ENCODE measurements at regions of chr16 and their contacts with region 1.

Region 1: GRCh38 chr16:578870-579405 is 9.2 kb downstream of the PIGQ start:
- DNase-seq: peak; percentile 88
- ATAC-seq: peak; percentile 73
- H3K4me3 Mint-ChIP-seq: no peak overlapping the region
- H3K27ac Mint-ChIP-seq: no peak overlapping the region
- H3K4me1 Mint-ChIP-seq: peaks cover 4% of the 10 kb centered on the region
- H3K27me3 Mint-ChIP-seq: no peaks in the 10 kb centered on the region
- CTCF ChIP-seq: peak; percentile 73

Region 2: GRCh38 chr16:502179-502943 is 76.6 kb before region 1 on chr16:
- CTCF ChIA-PET with region 1: no interaction called
- POLR2A ChIA-PET with region 1: no interaction called
- DNase-seq: no peak
- ATAC-seq: no peak
- H3K4me3 Mint-ChIP-seq: no peak overlapping the region
- H3K27ac Mint-ChIP-seq: peak overlapping the region; percentile 69
- H3K4me1 Mint-ChIP-seq: peaks cover 3% of the 10 kb centered on the region; the same call in 1 of the 2 replicates
- H3K27me3 Mint-ChIP-seq: no peaks in the 10 kb centered on the region
- CTCF ChIP-seq: no peak

Region 3: DNA sequence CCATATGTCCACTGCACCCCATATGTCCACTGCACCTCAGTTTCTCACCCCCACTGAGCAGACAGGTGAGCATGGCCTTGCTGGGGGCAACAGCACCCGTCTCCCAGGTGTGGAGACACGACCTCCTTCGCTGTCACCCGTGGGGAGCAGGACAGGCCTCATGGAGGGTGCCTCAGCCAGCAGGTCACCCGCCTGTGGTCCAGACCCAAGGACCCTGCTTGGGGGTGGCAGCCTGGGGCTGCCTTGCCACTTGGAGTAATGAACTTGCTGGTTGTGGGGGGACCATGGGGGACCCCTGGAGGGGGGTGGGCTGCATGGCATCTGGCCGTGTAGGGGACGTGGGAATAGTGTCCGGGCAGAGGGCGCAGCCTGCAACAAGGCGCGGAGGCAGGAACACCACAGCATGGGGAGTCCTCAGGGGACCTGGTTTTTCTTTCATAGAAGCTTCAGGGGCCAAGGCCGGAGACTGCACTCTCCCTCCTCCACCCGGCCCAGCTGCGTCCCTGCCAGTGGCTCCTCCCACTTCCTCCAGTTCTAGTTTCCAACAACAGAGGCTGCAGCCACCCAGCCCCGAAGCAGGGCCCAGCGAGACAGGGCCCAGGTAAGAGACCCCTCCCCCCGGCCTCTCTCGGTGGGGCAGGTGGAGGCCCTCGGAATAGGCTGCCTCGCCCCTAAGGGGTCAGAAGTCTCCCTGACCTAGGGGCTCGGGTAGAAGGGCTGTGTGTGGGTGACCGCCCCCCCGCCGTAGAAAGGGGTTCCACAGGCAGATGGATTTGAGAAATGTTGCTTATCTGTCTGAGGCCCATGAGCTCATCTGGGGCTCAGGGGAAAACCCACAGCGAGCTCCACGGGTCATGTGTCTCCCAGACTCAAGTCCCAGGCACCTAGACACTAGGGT is 12.2 kb before region 1 on chr16 and contains the start of gene NHLRC4:
- CTCF ChIA-PET with region 1: interaction called, 18 read pairs
- POLR2A ChIA-PET with region 1: no interaction called
- DNase-seq: peak; percentile 76
- ATAC-seq: peak; percentile 64
- H3K4me3 Mint-ChIP-seq: peak within 1 kb of the TSS; percentile 10; the same call in 1 of the 2 replicates
- H3K27ac Mint-ChIP-seq: peak within 1 kb of the TSS; percentile 79
- H3K4me1 Mint-ChIP-seq: peaks cover 27% of the 10 kb centered on the region
- H3K27me3 Mint-ChIP-seq: peaks cover 8% of the 10 kb centered on the region
- CTCF ChIP-seq: no peak
- total RNA-seq, gene NHLRC4: 0.76 to 0.92 TPM (median 0.87 TPM) in 3 replicates

Region 4: DNA sequence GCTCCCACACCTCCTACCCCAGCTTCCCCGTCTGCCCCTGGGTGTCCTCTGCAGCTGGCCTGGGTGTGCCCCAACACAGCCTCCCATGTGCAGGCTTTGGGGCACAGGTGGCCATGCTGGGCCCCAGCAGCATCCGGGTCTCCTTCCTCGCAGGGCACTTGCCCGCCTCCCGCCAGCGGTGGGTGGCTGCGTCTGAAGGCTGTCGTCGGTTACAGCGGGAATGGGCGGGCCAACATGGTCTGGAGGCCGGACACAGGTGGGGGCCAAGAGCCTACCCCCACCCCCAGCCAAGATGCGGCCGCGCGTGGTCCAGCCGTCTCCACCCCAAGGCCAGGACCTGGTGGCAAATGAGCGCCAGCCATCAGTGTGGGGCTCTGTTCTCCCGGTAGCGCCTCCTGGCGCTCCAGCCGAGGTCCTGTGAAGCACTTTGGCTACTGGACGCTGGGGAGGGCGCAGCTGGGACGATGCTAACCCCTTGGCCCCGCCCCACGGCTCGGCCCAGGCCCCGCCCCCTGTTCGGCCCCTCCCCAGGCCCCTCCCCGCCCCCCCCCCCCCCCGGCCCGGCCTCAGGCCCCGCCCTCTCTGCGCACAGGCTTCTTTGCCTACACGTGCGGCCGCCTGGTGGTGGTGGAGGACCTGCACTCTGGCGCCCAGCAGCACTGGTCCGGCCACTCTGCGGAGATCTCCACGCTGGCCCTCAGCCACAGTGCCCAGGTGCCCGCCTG is 81.7 kb after region 1 on chr16:
- CTCF ChIA-PET with region 1: interaction called, 11 read pairs
- POLR2A ChIA-PET with region 1: no interaction called
- DNase-seq: peak; percentile 93
- ATAC-seq: peak; percentile 95
- H3K4me3 Mint-ChIP-seq: no peak overlapping the region; the same call in 1 of the 2 replicates
- H3K27ac Mint-ChIP-seq: no peak overlapping the region
- H3K4me1 Mint-ChIP-seq: peaks cover 4% of the 10 kb centered on the region
- H3K27me3 Mint-ChIP-seq: no peaks in the 10 kb centered on the region
- CTCF ChIP-seq: peak; percentile 58

Region 5: DNA sequence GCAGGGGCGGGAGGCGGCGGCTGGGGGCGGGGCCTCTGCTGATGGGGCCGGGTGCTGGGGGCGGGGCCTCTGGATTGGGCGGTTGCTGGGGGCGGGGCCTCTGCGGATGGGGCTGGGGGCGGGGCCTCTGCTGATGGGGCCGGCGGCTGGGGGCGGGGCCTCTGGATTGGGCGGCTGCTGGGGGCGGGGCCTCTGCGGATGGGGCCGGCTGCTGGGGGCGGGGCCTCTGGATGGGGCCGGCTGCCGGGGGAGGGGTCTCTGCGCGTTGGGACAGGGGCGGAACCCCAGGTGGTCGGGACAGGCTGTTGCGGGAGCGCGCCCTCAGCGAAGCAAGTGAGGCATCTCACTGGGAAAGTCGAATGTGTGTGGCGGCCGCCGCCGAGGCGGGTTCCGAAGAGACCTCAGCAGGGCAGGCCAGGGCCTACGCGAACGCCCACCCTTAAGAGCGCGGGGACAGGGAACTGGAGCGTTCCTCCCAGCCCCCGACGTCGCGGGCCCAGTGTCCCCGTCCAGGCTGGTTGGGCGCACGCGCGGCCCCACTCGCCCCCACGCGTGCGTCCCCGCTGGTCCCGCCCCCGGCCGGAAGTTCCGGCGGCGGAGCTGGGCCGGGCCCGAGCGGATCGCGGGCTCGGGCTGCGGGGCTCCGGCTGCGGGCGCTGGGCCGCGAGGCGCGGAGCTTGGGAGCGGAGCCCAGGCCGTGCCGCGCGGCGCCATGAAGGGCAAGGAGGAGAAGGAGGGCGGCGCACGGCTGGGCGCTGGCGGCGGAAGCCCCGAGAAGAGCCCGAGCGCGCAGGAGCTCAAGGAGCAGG is 101.1 kb after region 1 on chr16 and contains the start of gene STUB1:
- CTCF ChIA-PET with region 1: interaction called, 10 read pairs
- POLR2A ChIA-PET with region 1: no interaction called
- DNase-seq: peak; percentile 97
- ATAC-seq: peak; percentile 41
- H3K4me3 Mint-ChIP-seq: peak within 1 kb of the TSS; percentile 76
- H3K27ac Mint-ChIP-seq: peak within 1 kb of the TSS; percentile 85
- H3K4me1 Mint-ChIP-seq: peaks cover 27% of the 10 kb centered on the region
- H3K27me3 Mint-ChIP-seq: no peaks in the 10 kb centered on the region
- CTCF ChIP-seq: no peak
- total RNA-seq, gene STUB1: 79.0 to 88.2 TPM (median 85.8 TPM) in 3 replicates

Region 6: DNA sequence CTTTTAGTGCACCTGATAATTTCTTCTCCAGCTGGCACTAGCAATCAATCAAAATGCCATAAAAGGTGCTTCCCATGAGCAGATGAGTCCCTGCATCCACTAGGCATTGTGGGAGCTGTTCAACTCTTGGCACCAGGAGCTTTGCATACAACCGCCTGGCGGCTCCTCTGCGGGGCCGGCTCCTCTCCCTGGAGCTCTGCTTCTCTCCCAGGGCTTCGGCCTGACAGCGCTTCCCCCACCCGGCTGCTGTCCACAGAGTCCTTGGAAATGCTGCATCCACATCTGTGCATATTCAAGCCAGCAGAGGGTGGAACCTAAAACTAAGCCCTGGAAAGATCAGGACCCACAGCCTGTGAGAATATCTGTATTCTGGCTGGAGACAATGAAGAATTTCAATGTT is 328.9 kb after region 1 on chr16:
- CTCF ChIA-PET with region 1: no interaction called
- POLR2A ChIA-PET with region 1: no interaction called
- DNase-seq: no peak
- ATAC-seq: no peak
- H3K4me3 Mint-ChIP-seq: no peak overlapping the region
- H3K27ac Mint-ChIP-seq: no peak overlapping the region
- H3K4me1 Mint-ChIP-seq: no peaks in the 10 kb centered on the region
- H3K27me3 Mint-ChIP-seq: no peaks in the 10 kb centered on the region; the same call in 1 of the 2 replicates
- CTCF ChIP-seq: no peak